Esophagus muscularis mucosa (tissue), 4 donors: ENCODE measurements at regions of chr16 and their contacts with region 1.

Region 1: GRCh38 chr16:48535831-48536613 is 74.0 kb downstream of the N4BP1 start:
- DNase-seq: no peak
- H3K4me3 ChIP-seq: no peak overlapping the region
- H3K27ac ChIP-seq: peak overlapping the region; percentile 57 to 79 (median 64)
- H3K4me1 ChIP-seq: peaks cover 38 to 55% (median 52%) of the 10 kb centered on the region in 4 donors
- H3K27me3 ChIP-seq: no peaks in the 10 kb centered on the region
- CTCF ChIP-seq: no peak
- EP300 ChIP-seq: no peak
- POLR2A ChIP-seq: no peak

Region 2: DNA sequence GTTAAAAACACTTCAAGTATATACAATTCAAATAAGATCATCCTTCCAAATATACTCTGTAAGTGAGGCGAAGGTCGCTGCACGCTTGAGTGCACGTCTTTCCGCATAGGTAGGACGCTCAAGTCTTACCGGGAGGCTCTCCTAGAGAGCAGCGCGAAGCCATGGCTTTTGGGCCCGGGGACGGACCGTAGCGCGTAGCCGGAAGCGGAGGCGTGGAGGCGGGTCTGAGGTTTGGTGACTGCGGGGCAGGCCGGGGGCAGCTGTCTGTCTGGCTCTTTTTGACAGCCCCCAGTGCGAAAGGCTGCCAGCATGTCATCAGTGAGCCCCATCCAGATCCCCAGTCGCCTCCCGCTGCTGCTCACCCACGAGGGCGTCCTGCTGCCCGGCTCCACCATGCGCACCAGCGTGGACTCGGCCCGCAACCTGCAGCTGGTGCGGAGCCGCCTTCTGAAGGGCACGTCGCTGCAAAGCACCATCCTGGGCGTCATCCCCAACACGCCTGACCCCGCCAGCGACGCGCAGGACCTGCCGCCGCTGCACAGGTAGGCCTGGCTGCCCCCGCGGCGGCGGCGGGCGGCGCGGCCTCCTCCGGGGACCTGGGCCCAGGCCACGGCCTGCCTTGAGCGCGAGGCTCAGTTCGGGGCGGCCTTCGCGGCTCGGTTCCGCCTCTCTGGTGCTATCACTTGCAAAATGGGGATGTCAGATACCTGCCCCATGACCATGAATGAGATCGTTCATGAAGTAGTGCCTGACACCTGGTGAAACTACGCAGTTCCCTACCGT is 291.8 kb before region 1 on chr16 and contains the start of gene LONP2:
- intact Hi-C with region 1: loop called (anchors 10 kb)
- DNase-seq: peak; percentile 97
- H3K4me3 ChIP-seq: peak within 1 kb of the TSS; percentile 77 to 92 (median 86)
- H3K27ac ChIP-seq: peak within 1 kb of the TSS; percentile 85 to 94 (median 90)
- H3K4me1 ChIP-seq: peaks cover 32 to 45% (median 38%) of the 10 kb centered on the region in 4 donors
- H3K27me3 ChIP-seq: no peaks in the 10 kb centered on the region
- CTCF ChIP-seq: no peak
- EP300 ChIP-seq: no peak
- POLR2A ChIP-seq: peak; percentile 42
- total RNA-seq, gene LONP2: 51.4 to 73.4 (median 63.3) TPM